HEK293 (cell line): ENCODE measurements at regions of chr9 and their contacts with region 1.

Region 1: DNA sequence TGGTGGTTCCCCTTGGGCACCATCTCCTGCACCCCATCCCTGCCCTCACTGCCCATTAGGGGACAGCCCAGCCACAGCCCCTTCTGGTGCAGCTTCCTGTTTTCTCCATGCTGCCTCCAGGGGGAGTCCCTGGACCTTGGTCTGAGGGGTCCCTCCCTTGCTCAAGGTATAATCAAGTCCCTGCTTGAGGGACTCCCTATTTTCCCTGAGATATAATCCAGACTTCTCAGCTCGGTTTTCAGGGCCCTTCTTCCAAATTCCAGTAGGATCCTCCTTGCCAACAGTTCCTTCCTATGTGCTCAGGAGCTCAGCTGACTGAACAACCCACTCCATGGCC is 30.4 kb upstream of the DAB2IP start:
- H3K4me3 ChIP-seq: no peak overlapping the region
- H3K27ac ChIP-seq: no peak overlapping the region
- H3K4me1 ChIP-seq: no peaks in the 10 kb centered on the region
- CTCF ChIP-seq: no peak

Region 2: GRCh38 chr9:121529237-121529987 is 91.7 kb before region 1 on chr9:
- CTCF ChIA-PET with region 1: no interaction called
- POLR2A ChIA-PET with region 1: no interaction called
- H3K4me3 ChIP-seq: no peak overlapping the region
- H3K27ac ChIP-seq: no peak overlapping the region
- H3K4me1 ChIP-seq: no peaks in the 10 kb centered on the region
- CTCF ChIP-seq: no peak

Region 3: GRCh38 chr9:121598965-121599871 is 21.9 kb before region 1 on chr9:
- CTCF ChIA-PET with region 1: interaction called, 18 read pairs
- POLR2A ChIA-PET with region 1: interaction called, 3 read pairs
- H3K4me3 ChIP-seq: peak overlapping the region; percentile 74
- H3K27ac ChIP-seq: peak overlapping the region; percentile 60; the same call in 1 of the 2 replicates
- H3K4me1 ChIP-seq: no peaks in the 10 kb centered on the region
- CTCF ChIP-seq: no peak; the same call in 1 of the 2 replicates

Region 4: GRCh38 chr9:121609845-121610570 is 11.1 kb before region 1 on chr9:
- CTCF ChIA-PET with region 1: interaction called, 17 read pairs
- POLR2A ChIA-PET with region 1: no interaction called
- H3K4me3 ChIP-seq: no peak overlapping the region
- H3K27ac ChIP-seq: no peak overlapping the region
- H3K4me1 ChIP-seq: peaks cover 4% of the 10 kb centered on the region; the same call in 1 of the 2 replicates
- CTCF ChIP-seq: no peak

Region 5: GRCh38 chr9:121634329-121635261 is 13.5 kb after region 1 on chr9:
- CTCF ChIA-PET with region 1: interaction called, 19 read pairs
- POLR2A ChIA-PET with region 1: no interaction called
- H3K4me3 ChIP-seq: no peak overlapping the region
- H3K27ac ChIP-seq: no peak overlapping the region
- H3K4me1 ChIP-seq: no peaks in the 10 kb centered on the region
- CTCF ChIP-seq: no peak; the same call in none of the 2 replicates